ENCODE measurements at regions of chr17 and their contacts with region 1.

Region 1: DNA sequence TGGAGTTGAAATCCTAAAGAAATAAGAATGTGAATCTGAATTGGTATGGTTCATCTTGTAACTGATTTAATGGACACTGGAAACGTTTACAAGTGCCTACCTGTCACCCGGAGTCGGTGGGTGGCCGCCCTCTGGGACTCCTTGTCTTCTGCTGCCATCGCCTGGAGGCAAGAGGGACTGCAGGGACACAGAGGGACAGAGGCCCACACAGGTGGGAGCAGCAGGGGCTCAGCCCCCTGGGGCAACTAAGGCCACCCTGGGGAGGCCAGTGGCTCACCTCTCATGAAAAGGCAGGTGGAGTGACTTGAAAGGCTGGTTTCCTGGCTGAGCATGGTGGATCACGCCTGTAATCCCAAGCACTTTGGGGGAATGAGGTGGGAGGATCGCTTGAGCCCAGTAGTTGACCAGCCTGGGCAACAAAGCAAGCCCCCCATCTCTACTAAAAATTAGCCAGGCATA is 23.2 kb downstream of the TMEM92 start:
- DNase-seq: peak; percentile 66 to 82
- ATAC-seq: peak; percentile 90

Region 2: GRCh38 chr17:50020841-50021599 is 276.4 kb before region 1 on chr17:
- intact Hi-C with region 1: no loop called
- DNase-seq: no peak
- ATAC-seq: no peak

Region 3: GRCh38 chr17:50094753-50095619 is 202.4 kb before region 1 on chr17 and contains the start of gene PDK2:
- intact Hi-C with region 1: loop called in 1 of 2 experiments (anchors 10 kb)
- DNase-seq: peak; percentile 95 to 96
- ATAC-seq: peak; percentile 87
- total RNA-seq, gene PDK2: 59.5 to 71.4 TPM

Region 4: DNA sequence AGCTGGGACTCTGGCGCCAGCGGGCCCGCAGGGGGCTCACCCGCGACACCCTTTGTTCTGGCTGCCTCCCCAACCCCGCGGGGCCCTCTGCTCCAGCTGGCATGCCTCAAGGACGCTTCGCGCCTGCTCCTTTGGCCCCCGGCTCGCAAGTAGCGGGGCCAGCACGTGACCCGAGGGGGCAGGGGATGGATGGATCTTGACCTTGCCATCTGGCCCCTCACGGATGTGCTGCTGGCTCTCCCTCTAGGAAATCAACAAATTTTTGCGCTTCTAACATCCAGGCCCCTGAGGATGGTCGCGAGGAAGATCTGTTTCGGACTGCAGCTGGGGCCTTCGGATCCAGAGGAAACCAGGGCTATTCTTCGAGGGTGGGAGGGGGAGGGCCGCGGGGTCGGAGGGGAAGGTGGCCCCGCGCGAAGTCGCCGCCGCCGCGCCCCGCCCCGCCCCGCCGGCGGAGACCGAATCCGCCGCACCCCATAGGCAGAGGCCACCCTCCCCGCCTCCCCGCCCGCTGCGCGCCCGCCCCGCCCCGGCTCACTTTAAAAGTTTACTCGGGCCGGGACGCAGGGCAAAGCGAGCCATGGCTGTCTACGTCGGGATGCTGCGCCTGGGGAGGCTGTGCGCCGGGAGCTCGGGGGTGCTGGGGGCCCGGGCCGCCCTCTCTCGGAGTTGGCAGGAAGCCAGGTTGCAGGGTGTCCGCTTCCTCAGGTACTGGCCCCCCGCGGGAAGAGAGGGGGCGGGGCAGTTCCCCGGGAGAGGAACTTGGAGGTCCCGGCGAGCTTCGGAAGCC is 128.4 kb after region 1 on chr17 and contains the start of gene ACSF2:
- intact Hi-C with region 1: no loop called
- DNase-seq: peak; percentile 85 to 89
- ATAC-seq: peak; percentile 84
- total RNA-seq, gene ACSF2: 146 to 150 TPM